ENCODE measurements at regions of chr12 and their contacts with region 1.

Region 1: GRCh38 chr12:51922741-51923391 is 15.6 kb downstream of the ACVRL1 start:
- DNase-seq: no peak
- ATAC-seq: peak; percentile 24
- H3K4me3 ChIP-seq: no peak overlapping the region
- H3K27ac ChIP-seq: no peak overlapping the region
- H3K4me1 ChIP-seq: no peaks in the 10 kb centered on the region
- H3K27me3 ChIP-seq: no peaks in the 10 kb centered on the region
- CTCF ChIP-seq: no peak

Region 2: GRCh38 chr12:52004042-52004648 is 81.3 kb after region 1 on chr12:
- CTCF ChIA-PET with region 1: no interaction called
- POLR2A ChIA-PET with region 1: interaction called, 23 read pairs
- in situ Hi-C with region 1: no loop called
- intact Hi-C with region 1: no loop called
- DNase-seq: no peak
- ATAC-seq: peak; percentile 78
- H3K4me3 ChIP-seq: no peak overlapping the region
- H3K27ac ChIP-seq: no peak overlapping the region
- H3K4me1 ChIP-seq: no peaks in the 10 kb centered on the region
- H3K27me3 ChIP-seq: peaks cover 4% of the 10 kb centered on the region; the same call in 1 of the 2 replicates
- CTCF ChIP-seq: peak; percentile 85

Measured in Panc1 (cell line).